ENCODE measurements at regions of chr1 and their contacts with region 1.

Region 1: DNA sequence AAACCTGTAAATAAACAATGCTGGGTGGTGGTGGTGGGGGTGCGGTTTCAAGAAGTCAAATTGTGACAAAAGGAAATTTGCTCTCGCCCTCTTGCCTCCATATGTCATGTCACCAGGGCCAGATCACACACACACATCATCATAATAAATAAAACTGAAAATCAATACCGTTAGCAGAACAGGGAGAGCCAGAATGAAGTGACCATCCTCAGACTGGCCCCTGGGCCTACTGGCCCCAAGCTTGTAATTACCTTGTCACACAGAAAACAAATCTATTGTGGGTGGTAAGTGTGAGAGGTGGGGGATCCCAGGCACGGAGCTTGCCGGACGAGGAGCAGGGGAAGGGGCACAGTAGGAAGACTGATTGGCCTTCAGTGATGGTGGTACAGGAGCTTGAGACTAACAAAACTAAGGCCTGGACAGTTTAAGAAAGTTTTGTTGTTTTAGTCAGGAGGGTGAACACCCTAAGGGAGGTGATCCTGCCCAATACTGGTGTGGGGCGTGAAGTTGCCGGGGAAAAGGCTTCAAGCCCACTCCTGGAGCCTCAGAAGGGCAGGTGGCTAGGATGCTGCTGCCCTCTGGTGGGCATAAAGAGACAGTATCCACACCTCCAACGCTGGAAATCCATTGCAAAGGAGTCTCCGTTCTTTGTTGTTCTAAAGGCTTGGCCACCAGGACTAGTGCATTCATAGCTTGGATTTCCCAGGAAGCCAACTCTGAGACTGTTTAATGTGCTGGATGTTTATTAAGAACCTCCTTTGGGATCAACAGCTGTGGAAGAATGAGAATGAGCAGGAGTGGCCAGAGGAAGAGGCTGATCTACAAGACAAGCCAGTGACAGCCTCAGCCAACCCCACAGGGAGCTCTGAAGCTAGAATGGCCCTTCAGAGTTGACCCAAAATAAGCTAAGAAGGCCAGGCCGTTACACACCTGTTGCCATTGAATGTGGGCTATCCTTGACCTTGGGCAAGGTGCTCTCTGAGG is 8.1 kb upstream of the C1orf216 start:
- DNase-seq: peak; percentile 24
- ATAC-seq: peak; percentile 95
- H3K4me3 ChIP-seq: no peak overlapping the region
- H3K27ac ChIP-seq: no peak overlapping the region
- H3K4me1 ChIP-seq: no peaks in the 10 kb centered on the region
- H3K27me3 ChIP-seq: no peaks in the 10 kb centered on the region
- CTCF ChIP-seq: peak; percentile 78 to 88 (median 83); a peak in 5 of 6 replicates
- POLR2A ChIP-seq: no peak
- RAD21 ChIP-seq: peak; percentile 88

Region 2: GRCh38 chr1:35316264-35316663 is 410.5 kb before region 1 on chr1:
- CTCF ChIA-PET with region 1: no interaction called
- POLR2A ChIA-PET with region 1: no interaction called
- RAD21 ChIA-PET with region 1: no interaction called
- intact Hi-C with region 1: no loop called
- DNase-seq: no peak
- ATAC-seq: no peak
- H3K4me3 ChIP-seq: no peak overlapping the region
- H3K27ac ChIP-seq: no peak overlapping the region
- H3K4me1 ChIP-seq: no peaks in the 10 kb centered on the region
- H3K27me3 ChIP-seq: no peaks in the 10 kb centered on the region
- CTCF ChIP-seq: no peak
- POLR2A ChIP-seq: no peak
- RAD21 ChIP-seq: no peak

Region 3: DNA sequence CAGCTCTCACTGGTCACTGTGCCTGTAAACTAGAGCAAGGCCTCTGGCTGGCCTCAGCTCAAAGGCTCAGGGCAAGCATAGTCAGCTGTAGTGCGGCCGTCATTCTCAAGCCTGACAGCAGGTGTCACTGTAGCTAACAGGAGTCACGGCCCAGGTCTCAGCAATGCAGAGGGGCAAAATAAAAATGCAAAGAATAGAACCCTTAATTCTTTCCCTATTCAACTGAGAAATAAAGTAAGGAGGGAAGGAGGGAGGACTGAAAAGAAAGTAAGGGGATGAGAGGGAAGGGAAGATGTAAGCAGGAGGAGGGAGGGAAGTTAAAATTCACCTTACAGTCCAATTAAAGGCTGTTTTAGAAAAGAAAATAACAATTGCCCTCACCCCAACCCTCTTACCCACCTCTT is 275.6 kb before region 1 on chr1:
- CTCF ChIA-PET with region 1: interaction called, 5 read pairs
- POLR2A ChIA-PET with region 1: no interaction called
- RAD21 ChIA-PET with region 1: no interaction called
- intact Hi-C with region 1: loop called (anchors 2 kb)
- DNase-seq: peak; percentile 29
- ATAC-seq: peak; percentile 99
- H3K4me3 ChIP-seq: no peak overlapping the region
- H3K27ac ChIP-seq: no peak overlapping the region
- H3K4me1 ChIP-seq: no peaks in the 10 kb centered on the region
- H3K27me3 ChIP-seq: no peaks in the 10 kb centered on the region
- CTCF ChIP-seq: peak; percentile 79 to 87 (median 86)
- POLR2A ChIP-seq: no peak
- RAD21 ChIP-seq: peak; percentile 84

Region 4: DNA sequence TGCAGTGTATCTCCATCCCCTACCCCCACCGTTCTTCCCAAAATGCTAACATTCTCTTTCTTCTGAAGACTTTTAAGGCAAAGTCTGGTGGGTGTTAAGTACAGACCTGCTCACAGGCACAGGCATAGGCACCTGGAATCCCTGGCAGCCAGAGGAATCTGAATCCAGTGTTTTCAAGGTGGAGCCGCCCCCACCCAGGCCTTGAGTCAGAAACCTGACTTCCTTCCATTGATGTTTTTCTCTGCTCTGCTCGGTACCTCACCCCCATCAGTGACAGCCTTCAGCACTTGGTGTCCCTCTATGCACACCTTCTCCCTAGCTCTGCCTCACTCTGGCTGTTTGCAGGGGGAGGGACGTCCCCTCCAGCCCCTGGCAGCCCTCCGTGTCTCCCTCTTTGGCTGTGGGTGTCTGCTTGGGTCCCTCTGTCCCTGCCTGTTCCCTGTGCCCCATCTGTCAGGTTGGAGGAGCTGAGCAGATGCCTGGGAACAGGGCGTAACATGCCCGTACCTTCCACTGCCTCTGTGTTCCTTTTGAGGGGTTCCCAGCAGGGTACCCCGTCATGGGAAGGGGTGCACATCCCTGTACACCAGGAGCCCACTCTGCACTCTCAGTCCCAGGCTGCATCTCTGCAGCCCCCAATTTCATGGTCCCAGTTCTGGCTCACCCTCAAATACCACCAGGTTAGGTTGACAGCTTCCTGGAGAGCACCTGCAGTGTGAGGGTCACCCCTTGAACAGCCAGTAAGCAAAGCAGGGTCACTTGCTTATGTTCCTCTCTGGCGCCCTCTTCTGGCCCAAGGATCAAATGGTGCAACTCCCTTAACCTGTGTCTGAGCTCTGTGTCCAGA is 162.5 kb before region 1 on chr1:
- CTCF ChIA-PET with region 1: interaction called, 24 read pairs
- POLR2A ChIA-PET with region 1: no interaction called
- RAD21 ChIA-PET with region 1: interaction called in 1 of 2 experiments, 3 read pairs
- intact Hi-C with region 1: loop called (anchors 1 kb)
- DNase-seq: peak; percentile 58
- ATAC-seq: peak; percentile 77
- H3K4me3 ChIP-seq: no peak overlapping the region
- H3K27ac ChIP-seq: no peak overlapping the region
- H3K4me1 ChIP-seq: no peaks in the 10 kb centered on the region
- H3K27me3 ChIP-seq: no peaks in the 10 kb centered on the region
- CTCF ChIP-seq: peak; percentile 59 to 81 (median 72)
- POLR2A ChIP-seq: no peak
- RAD21 ChIP-seq: peak; percentile 75

Region 5: DNA sequence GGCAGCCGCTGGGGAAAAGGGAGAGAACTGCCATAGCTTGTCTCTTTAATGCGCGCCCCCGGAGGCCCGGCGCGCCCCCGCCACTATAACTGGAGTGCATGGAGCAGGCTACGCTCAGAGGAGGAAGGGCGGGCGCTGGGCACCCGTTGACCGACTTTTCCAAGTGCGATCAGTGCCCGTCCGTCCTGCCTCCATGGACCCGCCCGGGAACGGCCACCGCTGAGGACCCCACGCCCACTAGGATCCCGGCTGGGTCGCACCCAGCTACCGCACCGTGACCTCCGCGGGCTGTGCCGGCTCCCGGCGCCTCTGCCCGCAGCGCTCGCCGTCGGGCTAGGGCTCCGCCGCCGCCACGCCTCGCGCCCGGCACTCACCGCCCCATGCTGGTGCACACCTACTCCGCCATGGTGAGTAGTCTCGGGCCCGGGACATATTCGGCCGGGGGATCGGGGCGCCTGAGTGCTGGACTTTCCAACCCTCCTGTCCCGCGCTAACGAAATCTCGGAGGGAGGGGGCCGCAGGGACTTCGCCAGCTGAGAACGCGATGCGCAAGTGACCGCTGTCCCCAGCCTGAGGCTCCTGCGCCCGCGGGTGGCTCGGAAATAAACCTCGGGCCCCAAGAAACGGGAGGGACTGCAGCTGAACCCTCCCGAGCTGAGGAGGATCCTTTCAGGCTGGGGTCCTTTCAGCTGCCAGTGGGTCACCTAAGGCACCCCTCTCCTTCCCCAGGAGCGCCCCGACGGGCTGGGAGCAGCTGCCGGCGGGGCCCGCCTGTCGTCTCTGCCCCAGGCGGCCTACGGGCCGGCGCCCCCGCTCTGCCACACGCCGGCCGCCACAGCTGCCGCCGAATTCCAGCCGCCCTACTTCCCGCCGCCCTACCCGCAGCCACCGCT is 153.3 kb before region 1 on chr1 and contains the start of gene TFAP2E:
- CTCF ChIA-PET with region 1: interaction called, 24 read pairs
- POLR2A ChIA-PET with region 1: interaction called, 6 read pairs
- RAD21 ChIA-PET with region 1: interaction called in 1 of 2 experiments, 3 read pairs
- intact Hi-C with region 1: loop called (anchors 1 kb)
- DNase-seq: peak; percentile 38
- ATAC-seq: peak; percentile 76
- H3K4me3 ChIP-seq: peak within 1 kb of the TSS; percentile 70 to 89
- H3K27ac ChIP-seq: peak within 1 kb of the TSS; percentile 67; the same call in 1 of the 2 replicates
- H3K4me1 ChIP-seq: peaks cover 20 to 39% of the 10 kb centered on the region in 2 experiments; a peak in 3 of 4 replicates
- H3K27me3 ChIP-seq: no peaks in the 10 kb centered on the region
- CTCF ChIP-seq: no peak
- POLR2A ChIP-seq: no peak
- RAD21 ChIP-seq: no peak
- total RNA-seq, gene TFAP2E: 6.1 TPM

Region 6: GRCh38 chr1:35715568-35716002 is 11.2 kb before region 1 on chr1:
- CTCF ChIA-PET with region 1: interaction called, 49 read pairs
- POLR2A ChIA-PET with region 1: interaction called, 3 read pairs
- RAD21 ChIA-PET with region 1: no interaction called
- intact Hi-C with region 1: no loop called
- DNase-seq: peak; percentile 72
- ATAC-seq: peak; percentile 69
- H3K4me3 ChIP-seq: no peak overlapping the region
- H3K27ac ChIP-seq: no peak overlapping the region; the same call in 1 of the 2 replicates
- H3K4me1 ChIP-seq: peaks cover 11 to 25% of the 10 kb centered on the region in 2 experiments
- H3K27me3 ChIP-seq: no peaks in the 10 kb centered on the region
- CTCF ChIP-seq: peak; percentile 71 to 93 (median 89)
- POLR2A ChIP-seq: no peak
- RAD21 ChIP-seq: peak; percentile 84